ENCODE measurements at regions of chr20 and their contacts with region 1.

Region 1: GRCh38 chr20:18243802-18244201 is 44.5 kb upstream of the ZNF133 start:
- DNase-seq: no peak
- H3K4me3 Mint-ChIP-seq: no peak overlapping the region
- H3K27ac Mint-ChIP-seq: no peak overlapping the region
- H3K4me1 Mint-ChIP-seq: no peaks in the 10 kb centered on the region
- H3K27me3 Mint-ChIP-seq: no peaks in the 10 kb centered on the region
- CTCF ChIP-seq: no peak

Region 2: DNA sequence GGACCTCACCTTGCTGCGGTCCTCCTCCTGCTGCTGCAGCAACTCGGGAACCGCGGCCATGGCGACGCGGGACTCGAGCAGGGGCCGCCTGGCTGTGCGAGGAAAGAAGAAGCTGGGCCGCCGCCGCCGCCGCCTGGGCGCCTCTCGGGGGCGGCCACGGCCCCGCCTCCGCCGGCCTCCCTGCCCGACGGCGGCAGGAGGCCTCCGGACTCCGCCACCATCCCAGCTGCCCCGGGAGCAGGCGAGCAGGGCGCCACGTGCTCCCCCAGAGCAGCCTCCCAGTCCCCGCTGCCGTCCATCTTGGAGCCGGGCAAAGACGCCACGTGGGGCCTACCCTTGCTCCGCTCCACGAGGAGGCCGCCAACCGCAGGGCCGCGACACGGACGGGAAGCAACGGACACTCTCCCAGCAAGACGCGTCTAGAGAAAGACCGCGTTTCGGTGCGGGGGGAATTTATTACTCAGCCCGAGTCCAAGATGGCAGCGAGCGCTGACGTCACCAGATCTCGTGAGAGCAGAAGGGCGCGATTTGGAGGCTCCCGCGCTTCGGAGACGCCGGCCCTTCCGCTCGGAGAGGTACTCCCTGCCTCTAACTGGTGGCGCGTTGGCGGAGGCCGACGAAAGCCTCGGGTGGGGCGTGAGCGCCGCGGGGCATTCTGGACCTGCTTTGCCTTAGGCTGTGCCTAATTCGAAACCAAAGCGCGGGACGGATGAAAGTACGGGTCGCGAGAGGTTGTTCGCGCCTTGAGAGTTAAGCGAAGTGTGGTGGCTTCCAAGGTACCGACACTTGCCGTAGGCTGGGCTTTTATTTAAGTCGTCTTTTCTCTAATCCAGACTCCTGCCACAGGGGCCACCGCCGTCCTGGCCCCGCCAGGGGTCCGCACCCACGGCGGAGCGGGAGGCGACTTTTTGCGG is 275.2 kb before region 1 on chr20 and contains the starts of genes MGME1 and SNX5:
- CTCF ChIA-PET with region 1: no interaction called
- POLR2A ChIA-PET with region 1: no interaction called
- intact Hi-C with region 1: no loop called
- DNase-seq: peak; percentile 99
- H3K4me3 Mint-ChIP-seq: peak within 1 kb of the TSS; percentile 95
- H3K27ac Mint-ChIP-seq: peak within 1 kb of the TSS; percentile 98
- H3K4me1 Mint-ChIP-seq: peaks cover 39% of the 10 kb centered on the region
- H3K27me3 Mint-ChIP-seq: no peaks in the 10 kb centered on the region
- CTCF ChIP-seq: no peak
- total RNA-seq, gene MGME1: 18.0 and 24.0 TPM in 2 replicates
- total RNA-seq, gene SNX5: 108 and 170 TPM in 2 replicates

Region 3: GRCh38 chr20:18202966-18203365 is 40.8 kb before region 1 on chr20:
- CTCF ChIA-PET with region 1: no interaction called
- POLR2A ChIA-PET with region 1: no interaction called
- intact Hi-C with region 1: loop called (anchors 5 kb)
- DNase-seq: no peak
- H3K4me3 Mint-ChIP-seq: no peak overlapping the region
- H3K27ac Mint-ChIP-seq: no peak overlapping the region
- H3K4me1 Mint-ChIP-seq: no peaks in the 10 kb centered on the region
- H3K27me3 Mint-ChIP-seq: no peaks in the 10 kb centered on the region
- CTCF ChIP-seq: no peak